ENCODE measurements at regions of chrX and their contacts with region 1.

Region 1: DNA sequence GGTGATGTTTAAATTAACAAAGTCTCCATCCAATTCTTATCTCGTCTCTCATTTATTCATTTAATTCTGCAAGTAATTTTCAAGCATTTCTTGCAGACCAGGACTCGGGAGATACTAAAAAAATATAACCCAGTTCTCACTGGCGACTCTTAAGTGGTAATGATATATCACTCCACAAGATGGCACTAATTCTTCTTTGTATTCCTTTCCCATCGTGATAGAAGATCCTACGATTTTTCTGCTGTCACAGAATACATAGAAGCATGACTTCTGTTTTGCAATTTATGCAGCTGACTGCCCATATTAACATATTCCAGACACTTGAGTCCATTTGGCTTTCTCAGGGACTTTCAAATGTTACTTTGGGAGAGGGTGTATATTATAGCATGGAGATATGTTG is 64.0 kb upstream of the FGF13 start:
- DNase-seq: no peak
- H3K4me3 Mint-ChIP-seq: no peak overlapping the region
- H3K27ac Mint-ChIP-seq: no peak overlapping the region
- H3K4me1 Mint-ChIP-seq: no peaks in the 10 kb centered on the region
- H3K27me3 Mint-ChIP-seq: no peaks in the 10 kb centered on the region

Region 2: DNA sequence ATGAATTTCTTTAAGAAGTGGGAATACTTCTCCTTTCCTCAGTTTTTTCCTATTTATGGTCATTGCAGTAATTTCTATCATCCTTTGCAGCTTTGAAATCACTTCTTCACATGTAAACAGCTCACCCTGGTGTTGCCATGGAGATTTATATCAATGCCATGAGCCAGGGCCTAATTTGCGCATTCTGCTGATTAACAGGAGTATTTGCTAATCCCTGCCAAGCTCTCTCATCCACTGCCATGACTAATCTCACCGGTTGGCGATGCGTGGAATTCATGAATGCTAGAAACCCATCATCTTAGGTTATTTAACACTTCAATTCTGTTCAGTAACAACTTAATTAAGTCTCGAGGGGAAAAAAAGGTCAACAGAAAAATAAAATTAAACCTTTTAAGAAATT is 52.2 kb before region 1 on chrX:
- intact Hi-C with region 1: no loop called
- DNase-seq: no peak
- H3K4me3 Mint-ChIP-seq: no peak overlapping the region
- H3K27ac Mint-ChIP-seq: no peak overlapping the region
- H3K4me1 Mint-ChIP-seq: no peaks in the 10 kb centered on the region
- H3K27me3 Mint-ChIP-seq: no peaks in the 10 kb centered on the region

Region 3: GRCh38 chrX:139971394-139971749 is 1195.9 kb after region 1 on chrX:
- intact Hi-C with region 1: loop called (anchors 10 kb)
- DNase-seq: no peak
- H3K4me3 Mint-ChIP-seq: no peak overlapping the region
- H3K27ac Mint-ChIP-seq: no peak overlapping the region
- H3K4me1 Mint-ChIP-seq: no peaks in the 10 kb centered on the region
- H3K27me3 Mint-ChIP-seq: peaks cover 14% of the 10 kb centered on the region

Measured in activated CD4-positive, alpha-beta T cell treated with anti-CD3 and anti-CD28 coated beads, Interleukin-2, amount 10 ng/mL, durations not matched to agents 24 days and 14 days (primary cell).